GM18951 (cell line): ENCODE measurements at regions of chr1 and their contacts with region 1.

Region 1: DNA sequence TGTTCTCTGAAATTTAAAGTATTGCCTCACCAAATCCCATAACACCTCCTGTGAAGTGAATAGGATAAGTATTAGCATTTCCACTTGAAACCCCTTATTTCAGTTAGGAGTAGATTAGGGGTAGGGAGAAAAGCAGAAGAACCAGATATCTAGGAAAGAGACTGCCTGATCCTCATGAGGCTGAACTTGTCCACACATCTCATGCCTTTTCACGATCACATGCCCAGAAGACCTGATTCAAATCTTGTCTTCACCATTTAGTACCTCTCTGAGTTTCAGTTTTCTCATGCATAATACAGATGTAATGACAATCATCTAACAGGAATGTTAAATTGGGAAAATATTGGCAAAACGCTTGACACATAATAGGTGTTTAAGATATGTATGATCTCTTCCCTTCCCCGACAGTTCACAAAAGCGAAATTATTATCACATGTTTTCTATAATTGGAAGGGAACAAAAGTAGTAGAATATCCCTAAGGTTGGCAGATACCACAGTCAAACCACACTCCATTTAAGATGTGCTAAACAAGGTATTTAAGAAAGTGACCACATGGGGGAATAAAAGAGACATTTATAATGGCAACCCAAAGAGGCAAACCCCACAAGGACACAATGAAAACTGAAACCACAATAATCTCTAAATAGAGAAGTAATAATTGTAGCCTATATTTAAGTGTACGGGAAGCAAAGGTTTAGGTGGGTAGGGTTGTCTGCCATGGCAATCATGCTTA is 25.2 kb downstream of the GFI1 start:
- POLR2A ChIP-seq: no peak

Region 2: GRCh38 chr1:92310185-92310597 is 151.3 kb before region 1 on chr1:
- in situ Hi-C with region 1: loop called (anchors 10 kb)
- POLR2A ChIP-seq: no peak

Region 3: DNA sequence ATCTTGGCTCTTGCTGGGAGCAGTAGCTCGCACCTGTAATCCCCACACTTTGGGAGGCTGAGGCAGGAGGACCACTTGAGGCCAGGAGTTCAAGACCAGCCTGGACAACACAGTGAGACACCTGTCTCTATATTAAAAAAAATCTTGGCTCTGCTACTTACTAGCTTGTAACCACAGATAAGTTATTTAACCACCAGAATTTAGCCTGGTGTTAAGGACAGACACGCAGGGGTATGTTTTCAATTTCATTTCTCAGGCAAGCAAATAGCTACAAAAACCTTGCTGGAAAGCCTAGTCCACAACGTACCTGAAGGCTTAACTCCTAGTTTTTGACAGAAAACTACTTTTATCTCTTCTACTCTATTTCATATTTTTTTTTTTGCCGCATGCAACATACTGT is 50.0 kb after region 1 on chr1:
- in situ Hi-C with region 1: no loop called
- POLR2A ChIP-seq: no peak

Region 4: GRCh38 chr1:92960395-92961130 is 499.0 kb after region 1 on chr1:
- in situ Hi-C with region 1: no loop called
- POLR2A ChIP-seq: no peak